ENCODE measurements at regions of chr10 and their contacts with region 1.

Region 1: DNA sequence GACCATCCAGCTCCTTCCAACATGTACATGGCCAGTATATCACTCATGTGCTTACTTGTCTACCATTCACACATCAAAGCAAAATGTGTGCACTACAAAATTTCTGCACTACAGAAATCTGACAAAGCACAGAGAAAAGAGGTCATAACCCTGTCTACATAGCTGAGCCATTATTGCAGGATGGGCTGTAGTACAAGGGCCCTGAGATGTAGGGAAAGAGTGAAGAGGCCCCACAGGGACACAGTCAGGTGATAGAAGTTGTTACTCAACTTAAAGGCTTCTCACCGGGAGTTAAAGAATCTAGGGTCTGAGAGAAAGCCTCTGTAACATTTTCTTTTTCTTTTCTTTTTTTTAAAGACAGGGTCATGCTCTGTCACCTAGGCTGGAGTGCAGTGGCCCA is 17.5 kb downstream of the AVPI1 start:
- DNase-seq: no peak
- ATAC-seq: no peak
- H3K4me3 ChIP-seq: no peak overlapping the region
- H3K27ac ChIP-seq: no peak overlapping the region
- H3K4me1 ChIP-seq: peaks cover 0 to 15% (median 0%) of the 10 kb centered on the region in 9 donors
- H3K27me3 ChIP-seq: no peaks in the 10 kb centered on the region
- CTCF ChIP-seq: no peak

Region 2: DNA sequence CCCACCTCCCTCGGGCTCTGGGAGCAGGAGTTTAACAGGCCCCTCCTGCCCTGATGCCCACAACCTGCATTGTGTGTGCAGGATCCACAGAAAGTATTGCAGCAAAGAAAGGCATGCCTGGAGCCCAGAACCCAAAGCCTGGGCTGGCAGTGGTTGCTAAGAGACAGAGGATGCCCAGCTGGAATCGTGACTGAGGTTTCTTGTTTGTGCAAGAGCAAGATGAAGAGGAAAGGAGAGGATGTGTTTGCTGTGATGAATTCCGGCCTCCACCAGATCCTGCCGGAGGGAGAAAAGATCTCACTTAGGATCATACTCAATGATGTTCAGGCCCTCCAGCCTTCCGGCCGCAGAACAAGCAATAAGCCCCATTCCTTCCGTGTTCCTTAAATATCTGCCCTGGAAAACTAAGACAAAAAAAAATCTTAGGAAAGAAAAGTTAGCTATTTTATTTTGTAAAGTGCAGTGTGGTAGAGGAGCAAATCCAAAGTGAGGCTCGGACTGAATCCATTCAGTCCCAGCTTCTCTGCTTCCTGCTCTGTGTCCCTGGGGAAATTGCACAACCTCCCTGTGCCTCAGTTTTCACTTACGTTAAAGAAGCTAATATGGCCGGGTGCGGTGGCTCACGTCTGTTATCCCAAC is 540.9 kb before region 1 on chr10:
- intact Hi-C with region 1: no loop called
- DNase-seq: no peak
- ATAC-seq: no peak
- H3K4me3 ChIP-seq: no peak overlapping the region
- H3K27ac ChIP-seq: no peak overlapping the region
- H3K4me1 ChIP-seq: no peaks in the 10 kb centered on the region
- H3K27me3 ChIP-seq: peaks cover 0 to 36% (median 9%) of the 10 kb centered on the region in 7 donors
- CTCF ChIP-seq: no peak

Region 3: GRCh38 chr10:97651773-97652172 is 17.8 kb before region 1 on chr10:
- intact Hi-C with region 1: loop called in 1 of 10 experiments (anchors 2 kb)
- DNase-seq: no peak
- ATAC-seq: no peak
- H3K4me3 ChIP-seq: no peak overlapping the region
- H3K27ac ChIP-seq: peak overlapping the region in 1 of 10 donors; percentile 89
- H3K4me1 ChIP-seq: peaks cover 0 to 73% (median 11%) of the 10 kb centered on the region in 9 donors
- H3K27me3 ChIP-seq: no peaks in the 10 kb centered on the region
- CTCF ChIP-seq: no peak

Region 4: DNA sequence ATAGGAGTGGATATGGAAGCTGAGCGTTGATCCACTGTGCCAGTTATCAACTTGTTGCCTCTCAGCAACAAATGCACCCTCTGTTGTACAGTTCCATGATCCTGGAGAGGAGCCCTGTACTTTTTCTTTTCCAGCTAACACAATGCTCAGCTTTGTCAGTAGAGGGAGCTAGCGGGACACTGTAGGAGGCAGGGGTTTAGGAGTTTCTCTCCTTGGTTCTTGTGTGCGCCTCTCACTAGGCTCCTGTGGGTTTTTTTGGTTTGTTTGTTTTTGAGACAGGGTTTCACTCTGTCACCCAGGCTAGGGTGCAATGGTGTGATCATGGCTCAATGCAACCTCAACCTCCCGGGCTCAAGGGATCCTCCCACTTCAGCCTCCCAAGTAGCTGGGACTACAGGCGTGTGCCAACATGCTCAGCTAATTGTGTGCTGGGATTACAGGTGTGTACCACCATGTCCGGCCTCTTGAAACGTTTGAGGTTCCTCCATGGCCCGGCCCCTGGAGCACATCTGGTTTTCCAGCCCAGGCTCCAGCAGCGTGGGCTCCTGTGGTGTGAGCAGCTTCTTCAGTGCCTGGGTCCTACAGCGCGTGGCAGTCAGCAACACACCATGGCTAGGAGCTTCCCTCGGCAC is 32.0 kb after region 1 on chr10:
- intact Hi-C with region 1: no loop called
- DNase-seq: peak in 1 of 2 donors; percentile 45
- ATAC-seq: peak; percentile 77 to 93 (median 90)
- H3K4me3 ChIP-seq: no peak overlapping the region
- H3K27ac ChIP-seq: no peak overlapping the region
- H3K4me1 ChIP-seq: peaks cover 0 to 7% (median 0%) of the 10 kb centered on the region in 9 donors
- H3K27me3 ChIP-seq: peaks cover 0 to 4% (median 0%) of the 10 kb centered on the region in 7 donors
- CTCF ChIP-seq: peak; percentile 59 to 90 (median 84)

Region 5: DNA sequence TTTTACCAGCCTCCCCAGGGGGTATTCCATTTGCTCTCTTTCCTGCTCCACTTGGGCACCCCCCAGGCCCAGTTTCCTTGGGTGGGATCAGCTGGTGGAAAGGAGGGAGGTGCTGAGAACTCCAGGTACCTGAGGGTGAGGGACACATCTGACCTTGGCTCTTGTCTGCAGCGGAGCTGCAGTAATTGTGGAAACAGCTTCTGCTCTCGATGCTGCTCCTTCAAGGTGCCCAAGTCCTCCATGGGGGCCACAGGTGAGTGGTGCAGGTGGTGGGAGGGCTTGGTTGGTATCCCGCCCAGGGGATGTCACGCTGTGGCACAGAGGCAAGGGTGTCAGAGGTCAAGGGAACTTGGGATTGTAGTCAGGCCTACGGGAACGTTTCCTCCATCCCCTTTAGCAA is 87.9 kb after region 1 on chr10:
- intact Hi-C with region 1: no loop called
- DNase-seq: no peak
- ATAC-seq: no peak
- H3K4me3 ChIP-seq: no peak overlapping the region
- H3K27ac ChIP-seq: no peak overlapping the region
- H3K4me1 ChIP-seq: peaks cover 0 to 3% (median 0%) of the 10 kb centered on the region in 9 donors
- H3K27me3 ChIP-seq: no peaks in the 10 kb centered on the region
- CTCF ChIP-seq: no peak

Region 6: GRCh38 chr10:97827778-97828291 is 158.3 kb after region 1 on chr10:
- intact Hi-C with region 1: no loop called
- DNase-seq: no peak
- ATAC-seq: no peak
- H3K4me3 ChIP-seq: no peak overlapping the region
- H3K27ac ChIP-seq: no peak overlapping the region
- H3K4me1 ChIP-seq: peaks cover 0 to 5% (median 0%) of the 10 kb centered on the region in 9 donors
- H3K27me3 ChIP-seq: peaks cover 0 to 12% (median 0%) of the 10 kb centered on the region in 7 donors
- CTCF ChIP-seq: no peak